Activated CD4-positive, alpha-beta memory T cell treated with anti-CD3 and anti-CD28 coated beads for 36 hours (primary cell): ENCODE measurements at regions of chr1 and their contacts with region 1.

Region 1: GRCh38 chr1:58515794-58516401 is 30.6 kb downstream of the OMA1 start:
- DNase-seq: peak; percentile 16
- H3K4me3 Mint-ChIP-seq: no peak overlapping the region
- H3K27ac Mint-ChIP-seq: peak overlapping the region; percentile 23
- H3K4me1 Mint-ChIP-seq: peaks cover 3% of the 10 kb centered on the region
- H3K27me3 Mint-ChIP-seq: no peaks in the 10 kb centered on the region

Region 2: DNA sequence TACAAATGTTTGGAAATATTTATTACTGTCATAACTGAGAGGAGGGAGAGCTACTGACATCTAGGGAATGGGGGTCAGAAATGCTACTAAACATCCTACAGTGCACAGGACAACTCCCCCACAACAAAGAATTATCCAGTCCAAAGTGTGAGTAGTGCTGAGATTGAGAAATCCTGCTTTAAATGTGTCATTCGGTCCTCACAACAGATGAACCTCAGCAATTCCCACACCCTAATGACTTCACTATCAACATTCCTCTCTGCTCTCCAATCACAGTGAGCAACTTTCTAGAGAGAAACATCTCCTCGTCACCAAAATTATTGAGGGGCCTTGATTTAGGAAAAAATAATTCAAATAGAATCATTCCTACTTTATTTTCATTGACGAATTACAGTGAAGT is 12.6 kb after region 1 on chr1:
- CTCF ChIA-PET with region 1: interaction called, 44 read pairs
- POLR2A ChIA-PET with region 1: no interaction called
- intact Hi-C with region 1: no loop called
- DNase-seq: no peak
- H3K4me3 Mint-ChIP-seq: no peak overlapping the region
- H3K27ac Mint-ChIP-seq: no peak overlapping the region
- H3K4me1 Mint-ChIP-seq: peaks cover 19% of the 10 kb centered on the region
- H3K27me3 Mint-ChIP-seq: no peaks in the 10 kb centered on the region

Region 3: GRCh38 chr1:58539553-58539952 is 23.7 kb after region 1 on chr1:
- CTCF ChIA-PET with region 1: interaction called, 95 read pairs
- POLR2A ChIA-PET with region 1: no interaction called
- intact Hi-C with region 1: no loop called
- DNase-seq: no peak
- H3K4me3 Mint-ChIP-seq: no peak overlapping the region
- H3K27ac Mint-ChIP-seq: no peak overlapping the region
- H3K4me1 Mint-ChIP-seq: peaks cover 4% of the 10 kb centered on the region
- H3K27me3 Mint-ChIP-seq: no peaks in the 10 kb centered on the region

Region 4: DNA sequence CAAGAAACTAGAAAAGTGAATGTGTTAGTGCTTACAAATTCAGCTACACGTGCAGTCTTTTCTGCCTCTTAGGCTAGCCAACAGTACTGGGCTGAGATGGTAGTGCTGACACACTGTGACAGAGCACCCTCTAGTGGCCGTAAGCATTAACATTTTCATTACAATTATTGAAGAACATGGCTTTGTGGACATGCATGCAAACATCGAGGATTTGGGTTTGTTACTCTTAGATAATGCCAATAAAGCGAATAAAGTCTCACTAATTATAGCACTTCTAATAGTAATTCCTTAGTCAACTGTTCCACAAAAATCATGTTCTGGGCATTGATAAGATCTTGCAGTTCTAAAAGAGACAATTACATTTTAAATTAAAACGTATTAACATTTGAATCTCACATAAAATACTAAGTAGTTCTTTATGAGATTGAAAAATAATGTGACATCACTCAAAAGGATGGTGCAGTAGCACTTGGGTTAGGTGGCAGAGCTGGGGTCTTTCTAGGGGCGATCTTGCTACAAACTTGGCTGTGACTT is 136.8 kb after region 1 on chr1:
- CTCF ChIA-PET with region 1: interaction called, 158 read pairs
- POLR2A ChIA-PET with region 1: no interaction called
- intact Hi-C with region 1: loop called (anchors 1 kb)
- DNase-seq: peak; percentile 58
- H3K4me3 Mint-ChIP-seq: no peak overlapping the region
- H3K27ac Mint-ChIP-seq: no peak overlapping the region
- H3K4me1 Mint-ChIP-seq: peaks cover 11% of the 10 kb centered on the region
- H3K27me3 Mint-ChIP-seq: no peaks in the 10 kb centered on the region

Region 5: GRCh38 chr1:58664881-58665280 is 149.0 kb after region 1 on chr1:
- CTCF ChIA-PET with region 1: interaction called, 19 read pairs
- POLR2A ChIA-PET with region 1: no interaction called
- intact Hi-C with region 1: no loop called
- DNase-seq: no peak
- H3K4me3 Mint-ChIP-seq: no peak overlapping the region
- H3K27ac Mint-ChIP-seq: no peak overlapping the region
- H3K4me1 Mint-ChIP-seq: no peaks in the 10 kb centered on the region
- H3K27me3 Mint-ChIP-seq: no peaks in the 10 kb centered on the region

Region 6: DNA sequence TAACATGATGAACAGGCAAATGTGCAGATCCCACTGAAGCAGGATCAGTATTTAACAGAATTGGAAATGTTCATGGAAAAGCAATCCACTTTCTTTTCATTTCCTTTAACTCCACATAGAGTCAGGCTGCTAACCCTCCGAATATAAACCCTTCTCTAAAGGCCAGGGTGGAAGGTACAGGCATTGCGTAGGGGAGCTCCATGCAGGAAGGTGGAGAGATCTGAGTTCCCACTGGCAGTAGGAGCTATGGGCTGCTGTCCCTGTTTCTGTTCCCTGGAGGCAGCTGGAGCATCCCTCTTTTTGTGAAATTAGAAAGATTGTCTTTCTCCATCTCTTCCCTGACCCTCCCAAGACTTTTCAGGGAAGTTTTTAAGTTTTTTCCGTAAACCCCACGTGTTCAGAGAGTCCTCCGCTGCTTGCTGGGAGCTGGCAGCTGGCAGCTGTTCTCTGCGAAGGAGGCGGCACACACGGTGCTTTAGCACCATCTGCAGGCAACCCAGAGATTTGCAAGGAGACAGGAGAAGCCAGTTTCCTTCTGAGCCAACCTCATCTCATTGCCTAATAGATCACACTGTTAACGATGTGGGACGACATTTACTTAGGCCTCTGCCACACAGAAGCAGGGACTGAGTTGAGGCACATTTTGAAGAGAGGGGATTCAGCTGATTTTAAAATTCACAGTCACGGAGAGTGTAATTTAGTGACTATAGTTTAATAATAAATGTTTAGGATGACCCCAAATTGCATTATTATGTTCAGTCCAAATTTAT is 1243.4 kb after region 1 on chr1:
- CTCF ChIA-PET with region 1: interaction called, 13 read pairs
- POLR2A ChIA-PET with region 1: no interaction called
- intact Hi-C with region 1: loop called (anchors 5 kb)
- DNase-seq: peak; percentile 81
- H3K4me3 Mint-ChIP-seq: peak overlapping the region; percentile 40
- H3K27ac Mint-ChIP-seq: no peak overlapping the region
- H3K4me1 Mint-ChIP-seq: peaks cover 4% of the 10 kb centered on the region
- H3K27me3 Mint-ChIP-seq: no peaks in the 10 kb centered on the region